Left lung (tissue), 14 donors: ENCODE measurements at regions of chr1 and their contacts with region 1.

Region 1: DNA sequence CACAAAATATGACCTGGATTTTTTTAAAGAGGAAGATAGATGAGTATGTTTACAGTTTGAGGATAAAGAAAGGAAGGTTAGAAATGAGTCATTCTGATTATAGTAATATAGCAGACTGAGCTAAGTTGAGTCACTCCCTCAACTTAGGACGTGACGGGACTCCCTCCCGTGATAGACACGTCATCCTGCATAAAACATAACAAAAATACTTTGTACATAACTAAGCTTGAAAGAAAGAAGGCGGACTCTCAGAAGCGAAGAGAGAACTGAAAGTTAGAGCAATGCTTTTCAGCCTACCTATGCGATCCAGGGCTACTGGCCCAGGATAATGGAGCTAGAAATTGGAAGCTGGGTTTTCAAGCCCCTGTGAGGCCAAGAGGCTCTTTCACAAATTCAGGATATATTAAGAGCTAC is 53.0 kb upstream of the DESI2 start:
- DNase-seq: no peak
- ATAC-seq: peak; percentile 71
- H3K4me3 ChIP-seq: no peak overlapping the region
- H3K27ac ChIP-seq: no peak overlapping the region
- H3K4me1 ChIP-seq: no peaks in the 10 kb centered on the region
- H3K27me3 ChIP-seq: no peaks in the 10 kb centered on the region
- CTCF ChIP-seq: no peak

Region 2: DNA sequence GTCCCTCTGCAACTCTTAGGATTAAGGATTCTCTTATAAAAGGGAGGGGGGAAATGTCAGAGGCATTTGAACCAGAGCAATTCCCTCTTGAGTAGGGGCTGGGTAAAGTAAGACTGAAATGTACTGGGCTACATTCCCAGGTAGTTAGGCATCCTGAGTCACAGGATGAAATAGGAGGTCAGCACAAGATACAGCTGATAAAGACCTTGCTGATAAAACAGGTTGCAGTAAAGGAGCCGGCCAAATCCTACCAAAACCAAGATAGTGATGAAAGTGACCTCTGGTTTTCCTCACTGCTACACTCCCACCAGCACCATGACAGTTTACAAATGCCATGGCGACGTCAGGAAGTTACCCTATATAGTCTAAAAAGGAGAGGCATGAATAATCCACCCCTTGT is 221.2 kb after region 1 on chr1:
- intact Hi-C with region 1: no loop called
- DNase-seq: no peak
- ATAC-seq: no peak
- H3K4me3 ChIP-seq: no peak overlapping the region
- H3K27ac ChIP-seq: no peak overlapping the region
- H3K4me1 ChIP-seq: no peaks in the 10 kb centered on the region
- H3K27me3 ChIP-seq: no peaks in the 10 kb centered on the region
- CTCF ChIP-seq: no peak

Region 3: DNA sequence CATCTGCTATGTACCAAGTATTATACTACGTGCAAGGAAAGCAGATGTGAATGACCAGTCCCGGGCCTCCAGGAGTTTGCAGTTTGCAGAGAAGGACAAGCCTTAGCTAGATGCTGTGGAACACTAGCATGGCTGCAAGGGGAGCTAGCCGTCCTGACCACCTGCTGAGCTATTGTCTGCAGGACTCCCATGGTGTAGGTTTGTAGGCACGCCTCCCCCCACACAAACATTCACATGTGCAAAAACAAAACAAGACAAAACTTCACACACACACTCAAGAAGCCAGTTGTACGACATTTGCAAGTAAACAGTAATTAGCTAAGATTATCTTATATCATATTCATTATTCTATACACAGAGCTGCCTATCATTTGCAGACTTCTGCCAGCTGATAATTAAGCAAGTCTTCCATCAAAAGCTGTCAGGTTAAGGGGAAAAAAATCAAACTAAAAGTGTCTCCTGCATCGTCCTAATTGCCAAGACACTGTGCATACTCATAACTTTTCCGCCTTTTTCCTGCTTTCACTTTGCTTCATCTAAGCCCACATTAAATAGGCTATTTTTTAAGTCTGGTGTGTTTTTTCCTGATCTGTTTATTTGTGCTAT is 275.1 kb after region 1 on chr1:
- intact Hi-C with region 1: no loop called
- DNase-seq: no peak
- ATAC-seq: no peak
- H3K4me3 ChIP-seq: no peak overlapping the region
- H3K27ac ChIP-seq: no peak overlapping the region
- H3K4me1 ChIP-seq: no peaks in the 10 kb centered on the region
- H3K27me3 ChIP-seq: no peaks in the 10 kb centered on the region
- CTCF ChIP-seq: no peak

Region 4: GRCh38 chr1:245045087-245045881 is 445.3 kb after region 1 on chr1:
- intact Hi-C with region 1: loop called in 1 of 2 experiments (anchors 10 kb)
- DNase-seq: no peak
- ATAC-seq: peak; percentile 7
- H3K4me3 ChIP-seq: no peak overlapping the region
- H3K27ac ChIP-seq: no peak overlapping the region
- H3K4me1 ChIP-seq: peaks cover 0 to 4% of the 10 kb centered on the region in 2 donors
- H3K27me3 ChIP-seq: no peaks in the 10 kb centered on the region
- CTCF ChIP-seq: no peak